ENCODE measurements at regions of chr15 and their contacts with region 1.

Region 1: GRCh38 chr15:42736793-42737528 is at the start of gene CDAN1:
- DNase-seq: peak; percentile 42 to 90
- H3K4me3 ChIP-seq: peak within 1 kb of the TSS; percentile 78
- H3K27ac ChIP-seq: peak within 1 kb of the TSS; percentile 42; the same call in 1 of the 2 replicates
- H3K4me1 ChIP-seq: no peaks in the 10 kb centered on the region
- H3K27me3 ChIP-seq: no peaks in the 10 kb centered on the region
- CTCF ChIP-seq: no peak
- total RNA-seq, gene CDAN1: 19.2 and 23.4 TPM in 2 replicates

Region 2: DNA sequence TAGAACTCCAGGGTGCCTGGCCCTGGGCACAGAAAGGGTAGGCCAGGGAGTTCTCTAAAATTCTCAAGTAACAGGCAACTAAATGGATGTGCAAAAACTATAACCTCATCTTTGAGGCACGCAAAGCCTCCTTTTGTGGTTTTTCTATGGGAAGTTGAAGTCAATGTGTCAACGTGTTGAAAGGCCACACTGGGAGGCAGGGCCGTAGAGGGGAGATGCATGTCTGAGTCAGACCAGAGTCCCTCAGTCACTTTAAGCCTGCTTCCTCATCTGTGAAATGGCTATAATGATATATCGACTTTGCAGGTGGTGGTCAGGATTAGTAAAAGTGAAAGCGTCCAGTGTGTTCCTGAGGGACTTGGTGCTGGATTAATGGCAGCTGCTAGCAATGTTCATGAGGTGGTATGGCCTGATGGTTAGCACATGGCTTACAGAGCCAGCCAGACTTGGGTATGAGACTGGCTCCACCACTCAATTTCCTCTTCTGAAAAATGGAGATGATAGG is 512.8 kb after region 1 on chr15:
- CTCF ChIA-PET with region 1: interaction called, 12 read pairs
- POLR2A ChIA-PET with region 1: no interaction called
- intact Hi-C with region 1: no loop called
- DNase-seq: peak; percentile 59 to 97
- H3K4me3 ChIP-seq: peak overlapping the region; percentile 8; the same call in 1 of the 2 replicates
- H3K27ac ChIP-seq: peak overlapping the region; percentile 100
- H3K4me1 ChIP-seq: peaks cover 81% of the 10 kb centered on the region
- H3K27me3 ChIP-seq: no peaks in the 10 kb centered on the region
- CTCF ChIP-seq: no peak